ENCODE measurements at regions of chr22 and their contacts with region 1.

Region 1: GRCh38 chr22:40436505-40437451 is 66.4 kb downstream of the SGSM3 start:
- DNase-seq: peak; percentile 45 to 48
- H3K4me3 ChIP-seq: no peak overlapping the region
- H3K27ac ChIP-seq: peak overlapping the region; percentile 46 to 84 (median 72)
- H3K4me1 ChIP-seq: peaks cover 30 to 35% of the 10 kb centered on the region in 2 donors
- H3K27me3 ChIP-seq: no peaks in the 10 kb centered on the region
- CTCF ChIP-seq: peak; percentile 40 to 83 (median 62)
- POLR2A ChIP-seq: no peak

Region 2: GRCh38 chr22:40645579-40646197 is 208.9 kb after region 1 on chr22:
- intact Hi-C with region 1: loop called (anchors 2 kb)
- DNase-seq: no peak
- H3K4me3 ChIP-seq: no peak overlapping the region
- H3K27ac ChIP-seq: peak overlapping the region in 1 of 3 donors; percentile 9
- H3K4me1 ChIP-seq: peaks cover 7 to 16% of the 10 kb centered on the region in 2 donors
- H3K27me3 ChIP-seq: no peaks in the 10 kb centered on the region
- CTCF ChIP-seq: no peak
- POLR2A ChIP-seq: no peak

Region 3: GRCh38 chr22:40757071-40757470 is 320.3 kb after region 1 on chr22:
- intact Hi-C with region 1: loop called (anchors 10 kb)
- DNase-seq: no peak
- H3K4me3 ChIP-seq: no peak overlapping the region
- H3K27ac ChIP-seq: no peak overlapping the region
- H3K4me1 ChIP-seq: no peaks in the 10 kb centered on the region
- H3K27me3 ChIP-seq: no peaks in the 10 kb centered on the region
- CTCF ChIP-seq: no peak
- POLR2A ChIP-seq: no peak

Measured in thyroid gland (tissue), 4 donors.